ENCODE measurements at regions of chr12 and their contacts with region 1.

Region 1: GRCh38 chr12:109264095-109264942 is 44.8 kb downstream of the FOXN4 start:
- DNase-seq: peak in 1 of 9 donors; percentile 45
- ATAC-seq: no peak
- H3K4me3 ChIP-seq: no peak overlapping the region
- H3K4me3 Mint-ChIP-seq: no peak overlapping the region
- H3K27ac ChIP-seq: no peak overlapping the region
- H3K27ac Mint-ChIP-seq: no peak overlapping the region
- H3K4me1 ChIP-seq: no peaks in the 10 kb centered on the region
- H3K4me1 Mint-ChIP-seq: peaks cover 0 to 6% (median 0%) of the 10 kb centered on the region in 7 donors
- H3K27me3 ChIP-seq: no peaks in the 10 kb centered on the region
- H3K27me3 Mint-ChIP-seq: no peaks in the 10 kb centered on the region

Region 2: GRCh38 chr12:109154451-109155438 is 109.6 kb before region 1 on chr12:
- CTCF ChIA-PET with region 1: no interaction called
- POLR2A ChIA-PET with region 1: no interaction called
- intact Hi-C with region 1: no loop called
- DNase-seq: peak; percentile 58 to 87 (median 76)
- ATAC-seq: peak; percentile 99
- H3K4me3 ChIP-seq: peak overlapping the region; percentile 73
- H3K4me3 Mint-ChIP-seq: peak overlapping the region; percentile 85 to 98 (median 95)
- H3K27ac ChIP-seq: peak overlapping the region; percentile 61
- H3K27ac Mint-ChIP-seq: peak overlapping the region; percentile 71 to 95 (median 87)
- H3K4me1 ChIP-seq: peaks cover 5 to 10% of the 10 kb centered on the region in 2 donors
- H3K4me1 Mint-ChIP-seq: peaks cover 13 to 33% (median 19%) of the 10 kb centered on the region in 7 donors
- H3K27me3 ChIP-seq: no peaks in the 10 kb centered on the region
- H3K27me3 Mint-ChIP-seq: peaks cover 0 to 19% (median 0%) of the 10 kb centered on the region in 5 donors

Region 3: GRCh38 chr12:109385339-109386067 is 121.2 kb after region 1 on chr12:
- CTCF ChIA-PET with region 1: no interaction called
- POLR2A ChIA-PET with region 1: no interaction called
- intact Hi-C with region 1: loop called in 1 of 2 experiments (anchors 1 kb)
- DNase-seq: peak in 5 of 9 donors; percentile 2 to 28 (median 22)
- ATAC-seq: peak; percentile 32
- H3K4me3 ChIP-seq: no peak overlapping the region
- H3K4me3 Mint-ChIP-seq: no peak overlapping the region
- H3K27ac ChIP-seq: no peak overlapping the region
- H3K27ac Mint-ChIP-seq: no peak overlapping the region
- H3K4me1 ChIP-seq: no peaks in the 10 kb centered on the region
- H3K4me1 Mint-ChIP-seq: no peaks in the 10 kb centered on the region
- H3K27me3 ChIP-seq: no peaks in the 10 kb centered on the region
- H3K27me3 Mint-ChIP-seq: peaks cover 27 to 45% (median 40%) of the 10 kb centered on the region in 5 donors

Measured in naive thymus-derived CD4-positive, alpha-beta T cell (primary cell).